ENCODE measurements at regions of chr4 and their contacts with region 1.

Region 1: GRCh38 chr4:7206911-7207567 is 14.7 kb downstream of the SORCS2 start:
- DNase-seq: peak; percentile 58 to 81
- ATAC-seq: peak; percentile 84 to 88
- H3K4me3 ChIP-seq: no peak overlapping the region
- H3K27ac ChIP-seq: peak overlapping the region; percentile 16 to 70 (median 60)
- H3K4me1 ChIP-seq: peaks cover 10 to 18% of the 10 kb centered on the region in 2 donors
- H3K27me3 ChIP-seq: no peaks in the 10 kb centered on the region
- CTCF ChIP-seq: no peak
- POLR2A ChIP-seq: no peak

Region 2: GRCh38 chr4:5940470-5941203 is 1266.4 kb before region 1 on chr4:
- in situ Hi-C with region 1: no loop called
- intact Hi-C with region 1: no loop called
- DNase-seq: no peak
- ATAC-seq: no peak
- H3K4me3 ChIP-seq: no peak overlapping the region
- H3K27ac ChIP-seq: no peak overlapping the region
- H3K4me1 ChIP-seq: no peaks in the 10 kb centered on the region
- H3K27me3 ChIP-seq: peaks cover 0 to 4% (median 0%) of the 10 kb centered on the region in 3 donors
- CTCF ChIP-seq: no peak
- POLR2A ChIP-seq: no peak

Region 3: DNA sequence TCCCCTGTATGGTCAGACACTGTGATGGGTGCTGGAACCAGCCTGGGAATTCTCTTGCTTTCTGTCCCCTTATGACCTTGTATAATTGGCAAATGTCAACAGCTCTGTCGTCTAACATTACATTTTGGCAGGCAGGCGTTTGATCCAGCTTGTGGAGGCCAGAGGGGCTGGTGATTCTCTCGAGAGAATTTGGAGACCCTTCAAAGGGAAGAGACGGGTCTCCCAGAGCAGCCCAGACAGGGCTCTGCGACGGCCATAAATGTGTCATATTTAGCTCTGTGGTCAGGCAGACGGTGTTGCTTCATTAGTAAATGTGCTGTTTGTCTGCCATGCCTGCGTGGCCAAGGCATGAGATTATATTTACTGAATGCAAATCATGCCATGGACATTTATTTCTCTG is 54.0 kb after region 1 on chr4:
- in situ Hi-C with region 1: no loop called
- intact Hi-C with region 1: loop called (anchors 5 kb)
- DNase-seq: peak; percentile 43 to 47
- ATAC-seq: peak; percentile 81 to 92
- H3K4me3 ChIP-seq: no peak overlapping the region
- H3K27ac ChIP-seq: peak overlapping the region; percentile 60 to 79 (median 76)
- H3K4me1 ChIP-seq: peaks cover 23 to 25% of the 10 kb centered on the region in 2 donors
- H3K27me3 ChIP-seq: no peaks in the 10 kb centered on the region
- CTCF ChIP-seq: no peak
- POLR2A ChIP-seq: no peak

Measured in gastrocnemius medialis (tissue), 4 donors.